Mammary epithelial cell (primary cell): ENCODE measurements at regions of chr4 and their contacts with region 1.

Region 1: DNA sequence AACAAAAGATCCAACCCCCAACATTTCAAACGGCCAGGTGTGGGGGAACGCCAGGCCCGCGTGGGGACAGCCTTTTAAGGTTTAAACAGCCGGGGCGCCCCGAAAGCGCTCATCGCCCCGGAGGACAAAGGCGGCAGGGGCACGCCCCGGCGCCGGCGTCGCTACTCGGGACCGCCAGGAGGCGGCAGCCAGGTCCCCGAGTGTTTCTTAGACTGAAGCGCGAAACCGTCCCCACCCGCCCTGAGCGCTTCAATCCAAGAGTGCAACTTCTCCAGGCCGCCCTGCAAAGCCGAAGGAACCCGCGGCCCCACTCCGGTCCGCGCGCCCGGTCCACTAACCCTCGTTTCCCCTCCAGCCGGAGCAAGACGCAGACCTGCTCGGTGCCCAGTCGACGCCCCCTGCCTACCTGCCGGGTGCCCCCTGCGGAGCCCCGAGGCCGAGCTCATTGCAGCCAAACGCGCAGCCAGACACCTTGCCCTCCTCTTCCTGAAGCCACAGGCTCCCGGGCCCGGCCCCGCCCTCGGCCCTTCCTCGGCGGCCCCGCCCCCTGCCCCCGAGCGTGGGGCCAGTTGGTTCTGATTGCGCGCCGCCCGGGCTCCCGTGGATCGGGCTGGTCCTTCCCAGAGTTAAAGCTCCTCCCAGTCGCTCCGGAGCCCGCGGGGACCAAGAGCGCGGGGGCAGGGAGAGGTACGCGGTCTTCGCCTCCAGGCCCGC is at the start of gene CASP6:
- DNase-seq: peak; percentile 71
- H3K4me3 ChIP-seq: peak within 1 kb of the TSS; percentile 69 to 95 (median 69)
- H3K27ac ChIP-seq: peak within 1 kb of the TSS; percentile 65
- H3K4me1 ChIP-seq: peaks cover 14% of the 10 kb centered on the region
- H3K27me3 ChIP-seq: no peaks in the 10 kb centered on the region
- CTCF ChIP-seq: peak; percentile 20 to 73
- total RNA-seq, gene CASP6: 20.0 to 45.5 TPM

Region 2: GRCh38 chr4:109433205-109434006 is 269.7 kb before region 1 on chr4 and contains the start of gene SEC24B:
- CTCF ChIA-PET with region 1: no interaction called
- dilution Hi-C with region 1: no loop called
- in situ Hi-C with region 1: loop called in 1 of 2 experiments (anchors 25 kb)
- intact Hi-C with region 1: no loop called
- DNase-seq: peak; percentile 81
- H3K4me3 ChIP-seq: peak within 1 kb of the TSS; percentile 79 to 94 (median 86)
- H3K27ac ChIP-seq: peak within 1 kb of the TSS; percentile 86
- H3K4me1 ChIP-seq: peaks cover 19% of the 10 kb centered on the region
- H3K27me3 ChIP-seq: no peaks in the 10 kb centered on the region
- CTCF ChIP-seq: peak; percentile 53 to 59
- total RNA-seq, gene SEC24B: 22.0 to 34.7 TPM

Region 3: GRCh38 chr4:109559983-109560686 is 143.0 kb before region 1 on chr4 and contains the start of gene MCUB:
- CTCF ChIA-PET with region 1: no interaction called
- dilution Hi-C with region 1: no loop called
- in situ Hi-C with region 1: no loop called
- intact Hi-C with region 1: loop called (anchors 1 kb)
- DNase-seq: peak; percentile 90
- H3K4me3 ChIP-seq: peak within 1 kb of the TSS; percentile 64 to 68 (median 68)
- H3K27ac ChIP-seq: peak within 1 kb of the TSS; percentile 65
- H3K4me1 ChIP-seq: peaks cover 12% of the 10 kb centered on the region
- H3K27me3 ChIP-seq: no peaks in the 10 kb centered on the region
- CTCF ChIP-seq: no peak
- total RNA-seq, gene MCUB: 8.3 to 20.3 TPM

Region 4: DNA sequence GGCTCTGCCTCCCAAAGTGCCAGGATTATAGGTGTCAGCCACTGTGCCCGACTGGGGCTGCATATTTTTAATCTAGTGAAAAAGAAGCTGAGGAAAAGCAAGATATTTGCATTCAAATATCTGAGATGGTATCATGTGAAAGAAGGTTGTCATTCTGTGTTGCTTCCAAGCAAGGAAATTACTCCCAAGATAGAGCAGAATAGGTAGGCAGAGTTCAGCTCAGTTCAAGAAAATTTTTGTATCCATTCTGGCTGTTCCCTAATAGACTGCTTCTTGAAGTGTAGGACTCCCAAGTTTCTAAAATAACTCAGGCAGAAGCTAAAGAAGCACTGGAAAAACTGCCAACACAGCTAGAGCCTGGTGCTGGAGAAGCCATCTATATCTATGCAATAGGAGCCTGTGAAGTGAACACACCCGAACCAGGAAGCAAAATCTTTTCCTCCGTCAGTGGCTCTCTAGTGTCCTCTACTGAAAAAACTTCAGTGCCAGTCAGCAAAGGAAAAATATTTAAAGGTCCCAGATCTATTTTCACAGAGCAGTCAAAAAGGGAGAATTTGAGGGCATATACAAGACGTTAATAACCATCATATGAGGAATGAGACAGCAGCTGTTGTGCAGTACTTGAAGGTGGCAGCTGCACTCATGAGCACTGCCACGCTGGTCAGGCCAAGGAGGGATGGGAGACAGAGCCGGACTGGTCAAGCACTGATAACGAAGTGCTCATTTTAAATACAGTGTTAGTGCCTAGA is 128.8 kb before region 1 on chr4:
- CTCF ChIA-PET with region 1: no interaction called
- dilution Hi-C with region 1: no loop called
- in situ Hi-C with region 1: no loop called
- intact Hi-C with region 1: no loop called
- DNase-seq: no peak
- H3K4me3 ChIP-seq: no peak overlapping the region
- H3K27ac ChIP-seq: no peak overlapping the region
- H3K4me1 ChIP-seq: no peaks in the 10 kb centered on the region
- H3K27me3 ChIP-seq: no peaks in the 10 kb centered on the region
- CTCF ChIP-seq: peak in 1 of 2 donors; percentile 16

Region 5: DNA sequence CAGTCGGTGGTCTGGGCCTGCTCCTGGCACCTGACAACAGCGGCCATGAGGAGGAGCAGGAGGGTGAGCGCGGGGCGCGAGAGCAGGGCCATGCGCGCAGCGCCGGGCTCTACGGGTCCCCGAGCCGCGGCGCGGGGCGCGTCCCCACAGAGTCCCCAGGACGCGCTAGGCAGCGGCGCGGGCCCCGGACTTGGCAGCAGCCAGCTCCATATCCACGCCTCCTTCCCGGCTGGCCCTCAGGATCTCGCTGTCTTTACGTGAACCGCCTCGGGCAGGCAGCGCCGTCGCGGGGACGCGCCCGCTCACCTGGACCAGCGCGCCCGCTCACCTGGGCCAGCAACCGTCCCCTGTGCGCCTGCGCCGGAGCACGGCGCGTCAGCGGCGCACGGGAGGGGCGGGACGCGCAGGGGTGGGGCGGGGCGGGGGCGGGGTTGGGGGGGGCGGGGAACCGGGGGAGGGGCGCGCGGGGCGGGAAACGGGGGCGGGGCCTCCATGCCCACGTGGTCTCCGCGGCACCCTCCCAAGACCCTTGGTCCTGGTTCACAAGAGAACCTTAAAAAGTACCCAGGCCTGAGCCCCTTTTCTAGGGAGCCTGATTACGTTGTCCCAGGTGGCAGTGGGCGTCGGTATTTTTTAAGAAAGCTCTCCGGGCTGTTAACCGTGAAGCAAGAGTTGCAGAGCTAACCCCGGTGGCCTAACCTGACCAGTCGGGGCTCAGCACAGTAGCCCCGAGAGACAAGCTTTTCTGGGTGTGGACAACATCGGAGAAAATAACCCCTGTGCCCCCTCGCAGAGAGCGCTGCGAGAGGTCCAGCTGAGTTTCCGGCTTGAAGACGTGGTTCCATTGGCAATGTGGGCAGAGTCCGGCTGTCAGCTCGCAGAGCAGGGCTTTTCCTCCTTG is 26.9 kb after region 1 on chr4 and contains the start of gene PLA2G12A:
- CTCF ChIA-PET with region 1: no interaction called
- dilution Hi-C with region 1: no loop called
- in situ Hi-C with region 1: no loop called
- intact Hi-C with region 1: loop called (anchors 1 kb)
- DNase-seq: peak; percentile 93
- H3K4me3 ChIP-seq: peak within 1 kb of the TSS; percentile 70 to 81 (median 78)
- H3K27ac ChIP-seq: peak within 1 kb of the TSS; percentile 56
- H3K4me1 ChIP-seq: peaks cover 8% of the 10 kb centered on the region
- H3K27me3 ChIP-seq: no peaks in the 10 kb centered on the region
- CTCF ChIP-seq: no peak
- total RNA-seq, gene PLA2G12A: 38.9 to 59.0 TPM

Region 6: DNA sequence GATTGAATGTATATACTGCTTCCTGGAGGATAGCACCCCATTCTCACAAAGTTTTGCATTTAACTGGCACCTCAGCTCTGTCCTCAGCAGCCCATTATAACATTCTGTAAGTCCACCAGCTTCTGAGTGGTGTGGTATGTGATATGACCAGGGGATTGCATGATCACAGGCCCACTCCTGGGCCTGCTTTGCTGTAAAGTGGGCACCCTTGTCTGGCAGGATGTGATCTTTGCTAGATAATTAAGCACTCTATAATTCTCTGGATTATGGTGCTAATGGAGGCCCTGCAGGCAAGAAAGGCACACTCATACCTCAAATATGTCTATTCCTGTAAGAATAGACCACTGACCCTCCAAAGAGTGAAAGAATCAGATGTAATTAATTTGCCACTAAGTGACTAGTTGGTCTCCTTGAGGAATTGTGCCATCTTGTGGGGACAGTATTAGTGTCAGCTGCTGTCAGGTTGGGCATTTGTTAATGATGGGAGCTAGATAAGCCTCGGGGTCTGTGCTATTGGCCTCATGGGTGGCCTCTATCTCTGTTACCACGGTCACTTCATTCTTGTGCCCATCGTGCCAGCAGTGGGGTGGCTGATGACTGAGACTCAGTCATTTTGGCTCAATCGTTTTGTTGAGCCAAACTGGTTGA is 100.9 kb after region 1 on chr4:
- CTCF ChIA-PET with region 1: interaction called, 4 read pairs
- dilution Hi-C with region 1: no loop called
- in situ Hi-C with region 1: no loop called
- intact Hi-C with region 1: loop called (anchors 1 kb)
- DNase-seq: peak; percentile 36
- H3K4me3 ChIP-seq: no peak overlapping the region
- H3K27ac ChIP-seq: no peak overlapping the region
- H3K4me1 ChIP-seq: no peaks in the 10 kb centered on the region
- H3K27me3 ChIP-seq: no peaks in the 10 kb centered on the region
- CTCF ChIP-seq: peak; percentile 49 to 57

Region 7: GRCh38 chr4:109815151-109816081 is 112.3 kb after region 1 on chr4 and contains the start of gene GAR1:
- CTCF ChIA-PET with region 1: no interaction called
- dilution Hi-C with region 1: no loop called
- in situ Hi-C with region 1: no loop called
- intact Hi-C with region 1: loop called (anchors 5 kb)
- DNase-seq: peak; percentile 93
- H3K4me3 ChIP-seq: peak within 1 kb of the TSS; percentile 72 to 87 (median 82)
- H3K27ac ChIP-seq: peak within 1 kb of the TSS; percentile 87
- H3K4me1 ChIP-seq: no peaks in the 10 kb centered on the region
- H3K27me3 ChIP-seq: no peaks in the 10 kb centered on the region
- CTCF ChIP-seq: no peak
- total RNA-seq, gene GAR1: 3.3 to 22.7 TPM

Region 8: DNA sequence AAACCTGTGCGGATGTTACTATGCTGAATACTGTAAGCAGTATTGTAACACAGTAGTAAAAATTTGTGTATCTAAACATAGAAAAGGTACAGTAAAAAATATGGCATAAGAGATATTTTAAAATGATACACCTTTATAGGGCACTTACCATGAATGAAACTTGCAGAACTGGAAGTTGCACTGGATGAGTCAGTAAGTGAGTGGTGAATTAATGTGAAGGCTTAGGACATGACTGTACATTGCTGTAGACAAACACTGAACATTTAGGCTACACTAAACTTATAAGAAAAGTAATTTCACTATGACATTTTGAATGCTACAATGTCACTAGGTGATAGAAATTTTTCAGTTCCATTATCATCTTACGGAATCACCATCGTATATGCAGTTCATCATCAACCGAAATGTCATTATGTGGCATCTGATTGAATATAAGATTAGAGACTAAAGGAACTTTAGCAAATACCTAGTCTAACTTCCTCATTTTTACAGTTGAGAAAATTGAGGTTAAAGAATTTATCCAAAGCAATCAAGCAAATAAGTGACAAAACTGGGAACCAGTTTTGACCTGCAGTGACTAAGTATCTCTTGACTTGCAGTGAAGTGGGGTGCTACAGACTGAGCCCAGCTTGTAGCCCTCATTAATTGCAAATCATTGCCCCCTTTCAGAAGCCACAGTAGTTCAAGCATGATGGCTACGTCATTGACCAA is 264.8 kb after region 1 on chr4:
- CTCF ChIA-PET with region 1: no interaction called
- dilution Hi-C with region 1: no loop called
- in situ Hi-C with region 1: loop called in 1 of 2 experiments (anchors 25 kb)
- intact Hi-C with region 1: no loop called
- DNase-seq: peak; percentile 86
- H3K4me3 ChIP-seq: no peak overlapping the region
- H3K27ac ChIP-seq: peak overlapping the region; percentile 28
- H3K4me1 ChIP-seq: peaks cover 23% of the 10 kb centered on the region
- H3K27me3 ChIP-seq: no peaks in the 10 kb centered on the region
- CTCF ChIP-seq: no peak